OCI-LY7 (cell line): ENCODE measurements at regions of chr5 and their contacts with region 1.

Region 1: DNA sequence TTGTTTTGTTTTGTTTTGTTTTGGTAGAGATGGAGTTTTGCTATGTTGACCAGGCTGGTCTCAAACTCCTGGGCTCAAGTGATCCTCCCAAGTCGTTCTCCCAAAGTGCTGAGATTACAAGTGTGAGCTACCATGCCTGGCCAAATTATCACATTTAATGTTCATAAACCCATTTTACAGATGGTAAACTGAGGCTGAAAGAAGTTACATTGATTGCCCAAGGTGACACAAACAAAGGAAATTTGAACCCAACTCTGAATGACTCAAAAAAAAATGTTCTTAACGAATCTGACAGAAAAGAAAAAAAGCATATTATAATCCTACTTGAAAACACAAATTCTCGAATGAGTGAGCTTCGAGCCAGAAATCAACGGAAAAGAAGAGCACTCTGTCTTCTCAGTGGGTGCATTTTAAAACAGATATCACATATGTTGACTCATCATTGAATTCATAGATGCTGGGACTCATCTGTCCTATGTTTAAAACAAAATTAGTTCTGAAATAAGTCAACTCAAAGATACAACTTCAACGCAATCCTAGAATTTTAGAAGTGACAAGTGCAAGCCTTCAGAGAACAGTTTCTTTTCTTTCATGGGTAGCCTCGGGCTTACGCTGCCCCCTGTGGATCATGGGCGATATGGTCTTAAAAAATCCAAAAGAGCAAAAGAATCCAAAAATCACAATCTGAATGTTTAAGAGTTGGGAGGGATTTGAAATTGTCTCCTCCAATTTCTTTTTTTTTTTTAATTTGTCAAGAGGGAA is 28.4 kb downstream of the TIMD4 start:
- DNase-seq: peak; percentile 87
- H3K4me3 ChIP-seq: no peak overlapping the region
- H3K27ac ChIP-seq: peak overlapping the region; percentile 97
- H3K4me1 ChIP-seq: peaks cover 83% of the 10 kb centered on the region
- CTCF ChIP-seq: peak; percentile 100

Region 2: DNA sequence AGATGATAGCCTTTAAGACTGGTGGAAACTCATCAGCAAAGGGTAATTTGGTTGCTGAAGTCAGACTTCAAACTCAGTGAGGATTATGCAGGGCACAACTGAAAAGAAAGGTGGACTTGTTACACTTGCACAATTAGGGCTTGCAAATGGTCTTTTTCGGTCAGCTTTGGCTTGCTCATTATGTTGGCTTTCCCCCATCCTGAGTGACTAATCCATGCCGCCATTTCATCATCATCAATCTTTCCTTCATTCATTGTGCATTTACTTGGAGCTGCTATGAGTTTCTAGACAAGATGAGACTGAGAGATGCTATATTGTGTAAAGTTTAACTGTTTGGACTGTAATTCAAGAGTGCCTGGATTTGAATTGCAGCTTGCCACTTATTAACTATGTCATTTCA is 219.3 kb before region 1 on chr5:
- CTCF ChIA-PET with region 1: interaction called, 3 read pairs
- POLR2A ChIA-PET with region 1: no interaction called
- intact Hi-C with region 1: loop called (anchors 2 kb)
- DNase-seq: no peak
- H3K4me3 ChIP-seq: no peak overlapping the region
- H3K27ac ChIP-seq: no peak overlapping the region
- H3K4me1 ChIP-seq: peaks cover 16% of the 10 kb centered on the region
- CTCF ChIP-seq: no peak

Region 3: DNA sequence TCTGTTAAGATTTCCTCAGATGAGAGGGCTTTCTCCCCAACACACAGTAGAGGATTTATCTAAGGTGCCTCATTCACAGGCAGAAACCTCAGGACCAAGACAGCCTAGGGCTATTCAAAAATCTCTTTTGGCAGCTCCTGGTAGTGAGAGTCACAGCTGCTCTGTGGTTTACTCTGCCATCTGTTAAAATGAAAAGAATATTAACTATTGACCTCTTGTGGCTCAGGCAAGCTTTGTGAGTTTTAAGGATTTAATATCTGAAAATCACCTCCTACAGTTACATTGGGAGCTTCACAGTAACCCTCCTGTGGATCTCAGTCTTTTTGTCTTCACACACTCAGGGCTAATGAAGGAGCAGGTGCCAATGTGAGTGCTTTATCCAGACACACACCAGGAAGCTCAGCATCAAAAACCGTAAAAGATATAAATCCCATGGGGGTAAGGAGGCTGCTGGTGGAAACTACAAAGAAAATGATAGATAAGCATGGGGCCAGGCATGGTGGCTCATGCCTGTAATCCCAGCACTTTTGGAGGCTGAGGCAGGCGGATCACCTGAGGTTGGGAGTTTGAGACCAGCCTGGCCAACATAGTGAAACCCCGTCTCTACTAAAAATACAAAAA is 54.9 kb before region 1 on chr5:
- CTCF ChIA-PET with region 1: interaction called, 6 read pairs
- POLR2A ChIA-PET with region 1: interaction called, 250 read pairs
- intact Hi-C with region 1: loop called (anchors 1 kb)
- DNase-seq: peak; percentile 89
- H3K4me3 ChIP-seq: peak overlapping the region; percentile 11
- H3K27ac ChIP-seq: peak overlapping the region; percentile 98
- H3K4me1 ChIP-seq: peaks cover 72% of the 10 kb centered on the region
- CTCF ChIP-seq: peak; percentile 47

Region 4: DNA sequence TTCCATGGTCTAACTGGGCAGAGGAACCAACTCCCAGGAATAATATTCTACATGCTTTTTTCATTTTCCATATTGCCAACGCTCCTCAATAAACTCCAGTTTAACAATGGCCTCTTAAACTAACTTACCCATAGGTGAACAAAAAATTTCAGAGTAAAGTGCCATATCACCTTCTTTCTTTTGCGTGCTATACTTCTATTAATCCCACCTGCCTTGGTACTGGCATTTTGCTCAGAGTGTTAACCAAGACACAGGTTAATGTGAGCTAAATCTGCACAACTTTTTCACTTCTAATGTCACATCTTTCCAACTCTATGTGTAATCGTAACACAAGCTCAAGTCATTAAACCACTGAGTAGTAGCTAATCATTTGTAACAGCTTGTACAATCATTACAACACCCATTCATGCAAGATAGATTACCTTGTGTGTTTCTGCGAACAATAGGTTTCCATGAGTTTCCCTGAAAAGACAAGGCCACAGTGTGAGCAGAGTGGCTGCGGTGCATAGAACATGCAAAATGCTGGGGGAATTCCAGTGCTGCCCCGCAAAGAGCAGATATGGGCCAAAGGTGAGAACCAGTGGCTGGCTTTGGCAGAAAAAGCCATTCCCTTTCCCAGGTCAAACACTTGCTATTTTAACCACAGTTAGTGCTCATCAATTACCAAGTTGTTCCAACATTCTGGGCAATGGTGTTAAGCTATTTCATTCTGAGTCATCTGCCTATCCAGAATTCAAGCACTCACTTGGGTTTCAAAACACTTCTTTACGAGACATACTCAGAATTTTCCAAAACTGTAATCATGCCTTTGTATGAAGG is 14.4 kb before region 1 on chr5:
- CTCF ChIA-PET with region 1: interaction called, 11 read pairs
- POLR2A ChIA-PET with region 1: interaction called, 271 read pairs
- intact Hi-C with region 1: no loop called
- DNase-seq: no peak
- H3K4me3 ChIP-seq: peak overlapping the region; percentile 7
- H3K27ac ChIP-seq: peak overlapping the region; percentile 83
- H3K4me1 ChIP-seq: peaks cover 96% of the 10 kb centered on the region
- CTCF ChIP-seq: no peak

Region 5: GRCh38 chr5:156981481-156981880 is 46.9 kb after region 1 on chr5:
- CTCF ChIA-PET with region 1: no interaction called
- POLR2A ChIA-PET with region 1: interaction called, 70 read pairs
- intact Hi-C with region 1: loop called (anchors 1 kb)
- DNase-seq: peak; percentile 61
- H3K4me3 ChIP-seq: peak overlapping the region; percentile 49
- H3K27ac ChIP-seq: peak overlapping the region; percentile 95
- H3K4me1 ChIP-seq: peaks cover 69% of the 10 kb centered on the region
- CTCF ChIP-seq: no peak

Region 6: GRCh38 chr5:157265714-157266285 is 331.2 kb after region 1 on chr5 and contains the start of gene CYFIP2:
- CTCF ChIA-PET with region 1: no interaction called
- POLR2A ChIA-PET with region 1: no interaction called
- intact Hi-C with region 1: loop called (anchors 5 kb)
- DNase-seq: peak; percentile 91
- H3K4me3 ChIP-seq: peak within 1 kb of the TSS; percentile 82
- H3K27ac ChIP-seq: peak within 1 kb of the TSS; percentile 98
- H3K4me1 ChIP-seq: peaks cover 63% of the 10 kb centered on the region
- CTCF ChIP-seq: no peak
- total RNA-seq, gene CYFIP2: 221 and 258 TPM in 2 replicates